Endothelial cell of umbilical vein (primary cell): ENCODE measurements at regions of chr13 and their contacts with region 1.

Region 1: DNA sequence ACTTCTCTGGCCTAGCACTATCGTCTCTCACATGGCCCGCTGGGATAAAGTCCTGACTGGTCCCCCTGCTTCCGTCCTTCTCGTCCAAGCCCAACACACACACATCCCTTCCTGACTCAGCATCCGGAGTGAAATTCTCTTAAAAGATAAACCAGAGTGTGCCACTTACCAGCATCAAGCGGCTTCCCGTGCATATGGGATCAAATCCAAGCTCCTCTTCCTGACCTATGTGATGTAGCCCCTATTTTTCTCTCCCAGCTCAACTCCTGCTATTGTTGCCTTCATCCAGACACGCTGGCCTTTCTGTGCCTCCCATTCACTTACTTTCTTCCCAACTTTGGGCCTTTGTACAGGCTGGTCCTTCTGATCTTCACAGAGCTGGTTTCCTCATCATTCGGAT is 530.4 kb downstream of the DIAPH3 start:
- DNase-seq: peak; percentile 81
- H3K4me3 ChIP-seq: no peak overlapping the region
- H3K27ac ChIP-seq: peak overlapping the region; percentile 58
- H3K4me1 ChIP-seq: peaks cover 27% of the 10 kb centered on the region
- H3K27me3 ChIP-seq: no peaks in the 10 kb centered on the region
- CTCF ChIP-seq: no peak
- POLR2A ChIP-seq: no peak

Region 2: DNA sequence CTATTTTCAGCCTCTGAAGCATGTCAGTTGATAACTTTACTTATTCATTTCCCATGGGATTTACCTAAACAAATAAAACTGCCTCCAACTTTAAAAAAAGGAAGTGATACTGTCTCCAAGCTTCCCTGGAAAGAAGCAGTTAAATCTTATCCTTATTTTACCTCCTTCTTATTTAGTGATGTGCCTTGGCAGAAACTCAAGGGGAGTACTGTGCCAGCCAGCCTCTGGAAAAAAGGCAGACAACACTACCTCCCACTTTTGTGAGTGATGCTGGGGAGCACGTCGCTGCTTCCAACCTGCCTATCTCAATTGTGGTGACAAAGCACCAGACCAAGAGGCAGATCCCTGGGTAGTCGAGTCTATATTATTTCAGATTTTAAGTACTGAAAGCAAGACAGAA is 235.2 kb before region 1 on chr13:
- CTCF ChIA-PET with region 1: no interaction called
- POLR2A ChIA-PET with region 1: no interaction called
- dilution Hi-C with region 1: no loop called
- intact Hi-C with region 1: loop called (anchors 2 kb)
- DNase-seq: peak; percentile 56
- H3K4me3 ChIP-seq: no peak overlapping the region
- H3K27ac ChIP-seq: no peak overlapping the region
- H3K4me1 ChIP-seq: peaks cover 24% of the 10 kb centered on the region
- H3K27me3 ChIP-seq: no peaks in the 10 kb centered on the region
- CTCF ChIP-seq: no peak
- POLR2A ChIP-seq: no peak

Region 3: GRCh38 chr13:59477011-59477410 is 156.3 kb before region 1 on chr13:
- CTCF ChIA-PET with region 1: no interaction called
- POLR2A ChIA-PET with region 1: no interaction called
- dilution Hi-C with region 1: no loop called
- intact Hi-C with region 1: loop called (anchors 1 kb)
- DNase-seq: peak; percentile 41
- H3K4me3 ChIP-seq: no peak overlapping the region
- H3K27ac ChIP-seq: no peak overlapping the region
- H3K4me1 ChIP-seq: peaks cover 44% of the 10 kb centered on the region
- H3K27me3 ChIP-seq: no peaks in the 10 kb centered on the region
- CTCF ChIP-seq: peak; percentile 51 to 59
- POLR2A ChIP-seq: no peak

Region 4: DNA sequence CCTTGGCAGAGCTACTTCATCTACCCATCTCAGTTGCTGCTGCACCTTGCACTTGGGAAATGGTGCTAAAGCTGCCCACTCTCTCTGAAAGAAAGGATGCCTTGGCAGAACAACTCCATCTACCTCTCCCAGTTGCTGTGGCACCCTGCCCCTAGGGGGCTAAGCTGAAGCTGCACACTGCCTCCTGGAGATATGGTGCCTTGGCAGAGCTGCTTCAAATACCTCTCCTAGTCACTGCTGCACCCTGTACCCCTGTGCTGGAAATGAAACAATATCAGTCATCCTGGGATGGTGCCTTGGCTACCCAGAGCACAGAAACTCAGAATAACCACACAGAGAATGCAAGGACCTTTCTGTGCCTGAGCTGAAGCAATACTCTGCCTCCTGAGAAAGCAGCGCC is 85.3 kb before region 1 on chr13:
- CTCF ChIA-PET with region 1: no interaction called
- POLR2A ChIA-PET with region 1: no interaction called
- dilution Hi-C with region 1: no loop called
- intact Hi-C with region 1: no loop called
- DNase-seq: no peak
- H3K4me3 ChIP-seq: no peak overlapping the region
- H3K27ac ChIP-seq: no peak overlapping the region
- H3K4me1 ChIP-seq: no peaks in the 10 kb centered on the region
- H3K27me3 ChIP-seq: no peaks in the 10 kb centered on the region
- CTCF ChIP-seq: no peak
- POLR2A ChIP-seq: no peak

Region 5: DNA sequence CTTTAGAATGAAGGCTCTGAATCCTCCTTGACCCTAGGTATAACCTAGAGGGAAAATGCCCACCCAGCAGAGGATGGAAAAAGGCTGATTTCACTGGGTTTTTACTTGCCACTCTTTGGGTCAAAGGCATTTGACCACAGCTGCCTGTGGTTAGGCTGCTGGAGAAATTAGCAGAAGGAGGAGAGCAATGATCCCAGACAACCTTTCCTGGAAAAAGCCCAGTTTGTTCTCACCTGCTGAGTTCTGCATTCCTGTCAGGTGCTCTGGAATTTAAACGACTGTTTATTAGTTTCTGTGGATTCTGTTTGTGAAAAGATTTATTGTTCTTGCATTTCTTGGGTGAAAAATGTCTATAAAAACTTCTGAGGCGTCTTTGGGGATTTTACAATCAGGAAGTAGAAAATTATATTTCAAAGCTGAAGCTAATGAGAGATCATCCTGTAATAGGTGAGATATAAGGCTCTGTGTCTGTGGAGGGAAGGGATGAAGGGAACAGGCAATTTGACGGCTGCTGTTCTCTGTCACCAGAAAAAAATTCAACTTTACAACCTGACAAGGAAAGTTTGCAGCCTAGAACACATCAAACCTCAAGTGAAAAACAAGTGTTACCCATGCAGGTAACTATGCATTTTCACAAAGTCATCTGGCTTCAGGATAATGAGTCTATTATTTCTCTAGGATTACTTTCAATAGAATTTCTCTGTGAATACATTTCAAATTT is 10.8 kb after region 1 on chr13:
- CTCF ChIA-PET with region 1: no interaction called
- POLR2A ChIA-PET with region 1: no interaction called
- dilution Hi-C with region 1: no loop called
- intact Hi-C with region 1: no loop called
- DNase-seq: no peak
- H3K4me3 ChIP-seq: no peak overlapping the region
- H3K27ac ChIP-seq: no peak overlapping the region
- H3K4me1 ChIP-seq: no peaks in the 10 kb centered on the region
- H3K27me3 ChIP-seq: no peaks in the 10 kb centered on the region
- CTCF ChIP-seq: no peak
- POLR2A ChIP-seq: no peak

Region 6: DNA sequence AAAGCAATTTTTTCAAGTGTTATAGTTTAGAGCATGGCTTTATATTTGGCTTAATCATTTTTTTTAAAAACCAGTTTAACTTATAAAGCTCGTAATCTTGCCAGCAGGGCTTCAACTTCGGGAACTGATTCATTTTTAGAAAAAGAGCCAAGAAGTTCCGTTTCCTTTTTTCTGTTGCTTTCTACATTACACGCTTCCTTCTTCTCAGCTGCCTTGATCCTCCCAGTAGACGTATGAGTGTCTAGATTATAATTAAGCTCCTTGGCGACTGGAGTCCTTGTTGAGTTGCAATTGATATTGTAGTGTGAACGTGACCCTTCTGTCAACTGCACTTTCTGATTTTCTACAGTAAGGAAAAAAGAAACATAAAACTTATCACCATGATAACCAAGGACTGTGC is 33.2 kb after region 1 on chr13:
- CTCF ChIA-PET with region 1: interaction called, 3 read pairs
- POLR2A ChIA-PET with region 1: no interaction called
- dilution Hi-C with region 1: no loop called
- intact Hi-C with region 1: loop called (anchors 2 kb)
- DNase-seq: peak; percentile 93
- H3K4me3 ChIP-seq: peak overlapping the region in 1 of 3 experiments; percentile 3
- H3K27ac ChIP-seq: peak overlapping the region; percentile 69
- H3K4me1 ChIP-seq: peaks cover 16% of the 10 kb centered on the region
- H3K27me3 ChIP-seq: no peaks in the 10 kb centered on the region
- CTCF ChIP-seq: no peak
- POLR2A ChIP-seq: no peak